ENCODE measurements at regions of chr1 and their contacts with region 1.

Region 1: DNA sequence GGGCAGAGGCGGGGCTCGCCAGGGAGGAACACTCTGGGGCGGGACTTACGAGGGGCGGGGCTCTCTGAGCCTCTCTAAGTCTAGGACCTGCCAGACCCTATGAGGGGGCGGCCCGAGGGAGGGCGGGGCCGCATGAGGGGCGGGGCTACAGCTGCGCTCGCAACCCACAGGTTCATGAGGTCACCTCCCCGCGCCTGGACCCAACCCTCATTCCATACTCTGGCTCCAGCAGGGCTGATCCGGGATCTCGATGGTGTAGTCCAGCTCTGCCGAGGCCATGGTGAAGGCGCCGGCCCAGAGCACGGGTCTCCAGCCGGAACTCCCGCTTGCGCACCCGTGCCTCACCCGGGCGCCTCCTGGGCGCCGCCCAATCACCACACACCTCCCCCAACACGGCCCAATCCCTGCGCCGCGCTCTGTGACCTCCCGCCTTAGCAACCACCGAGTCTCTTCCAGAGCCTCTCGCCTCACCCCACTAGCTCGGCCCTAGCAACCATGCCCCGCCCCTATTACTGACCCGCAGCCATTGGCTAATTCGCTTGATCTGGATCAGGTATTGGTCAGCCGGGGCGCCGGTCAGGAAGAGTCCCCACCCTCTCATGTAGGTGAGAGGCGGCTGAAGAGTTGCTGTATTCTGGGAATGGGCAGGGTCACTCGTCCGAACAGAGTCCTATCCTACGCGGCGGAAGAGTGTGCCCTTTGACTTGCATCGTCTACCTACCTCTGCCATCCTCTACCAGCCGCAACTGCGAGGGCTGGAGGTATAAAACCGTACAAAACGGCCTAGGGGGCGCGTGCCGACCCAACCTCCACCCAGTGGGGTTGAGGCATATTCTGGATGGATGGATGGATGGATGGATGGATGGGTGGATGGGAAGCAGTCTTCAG is at the starts of genes ARMH1 and TMEM53:
- DNase-seq: peak; percentile 98
- ATAC-seq: peak; percentile 90
- H3K4me3 Mint-ChIP-seq: peak within 1 kb of the TSS; percentile 87
- H3K27ac Mint-ChIP-seq: peak within 1 kb of the TSS; percentile 93
- H3K4me1 Mint-ChIP-seq: peaks cover 32% of the 10 kb centered on the region
- H3K27me3 Mint-ChIP-seq: no peaks in the 10 kb centered on the region
- CTCF ChIP-seq: no peak
- total RNA-seq, gene ARMH1: 18.1 and 19.9 TPM in 2 replicates
- total RNA-seq, gene TMEM53: 4.6 and 4.8 TPM in 2 replicates

Region 2: DNA sequence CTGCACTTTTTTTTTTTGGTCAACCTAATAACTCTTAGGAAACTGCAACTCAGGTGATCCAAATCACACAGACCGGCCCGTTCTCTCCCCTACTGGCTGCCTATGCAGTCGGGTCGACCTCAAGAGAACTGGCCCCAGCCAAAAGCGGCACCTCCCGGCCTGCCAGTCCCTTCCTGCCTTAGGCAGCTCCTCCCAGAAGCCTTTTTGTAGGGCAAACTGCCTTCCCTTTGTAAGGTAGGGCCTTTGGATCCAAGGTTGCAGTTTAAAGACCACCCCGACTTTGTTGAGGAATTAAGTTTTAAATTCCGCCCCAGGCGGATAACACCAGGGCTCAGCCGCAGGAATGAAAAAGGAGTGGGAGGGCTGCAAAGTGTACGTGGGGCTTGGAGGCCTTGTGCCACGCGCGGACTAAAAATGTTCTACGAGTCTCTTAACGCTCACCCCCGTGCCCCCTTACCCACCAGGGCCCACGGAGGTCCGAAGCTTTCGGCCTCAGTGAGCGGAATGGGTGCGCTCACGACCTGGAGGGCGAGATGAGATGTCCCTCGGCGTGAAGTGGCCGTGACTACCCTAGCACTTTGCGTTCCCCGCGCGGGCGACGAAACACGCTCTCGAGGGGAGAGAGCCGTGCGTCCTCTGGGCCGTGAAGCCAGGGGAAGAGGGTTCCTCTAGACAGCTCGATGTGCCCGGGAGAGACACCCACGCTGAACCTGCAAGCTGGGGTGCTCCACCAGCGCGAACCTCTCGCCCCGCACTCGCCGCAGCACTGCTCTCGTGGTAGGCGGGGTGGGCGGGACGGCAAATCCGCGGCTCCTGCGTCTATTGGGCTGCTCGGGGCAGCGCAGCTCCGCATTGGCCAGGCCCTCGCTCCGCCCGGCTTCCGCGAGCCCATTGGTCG is 967.5 kb before region 1 on chr1:
- CTCF ChIA-PET with region 1: no interaction called
- POLR2A ChIA-PET with region 1: no interaction called
- intact Hi-C with region 1: loop called (anchors 5 kb)
- DNase-seq: no peak
- ATAC-seq: peak; percentile 97
- H3K4me3 Mint-ChIP-seq: peak overlapping the region; percentile 86
- H3K27ac Mint-ChIP-seq: peak overlapping the region; percentile 63
- H3K4me1 Mint-ChIP-seq: peaks cover 33% of the 10 kb centered on the region
- H3K27me3 Mint-ChIP-seq: no peaks in the 10 kb centered on the region
- CTCF ChIP-seq: no peak

Region 3: DNA sequence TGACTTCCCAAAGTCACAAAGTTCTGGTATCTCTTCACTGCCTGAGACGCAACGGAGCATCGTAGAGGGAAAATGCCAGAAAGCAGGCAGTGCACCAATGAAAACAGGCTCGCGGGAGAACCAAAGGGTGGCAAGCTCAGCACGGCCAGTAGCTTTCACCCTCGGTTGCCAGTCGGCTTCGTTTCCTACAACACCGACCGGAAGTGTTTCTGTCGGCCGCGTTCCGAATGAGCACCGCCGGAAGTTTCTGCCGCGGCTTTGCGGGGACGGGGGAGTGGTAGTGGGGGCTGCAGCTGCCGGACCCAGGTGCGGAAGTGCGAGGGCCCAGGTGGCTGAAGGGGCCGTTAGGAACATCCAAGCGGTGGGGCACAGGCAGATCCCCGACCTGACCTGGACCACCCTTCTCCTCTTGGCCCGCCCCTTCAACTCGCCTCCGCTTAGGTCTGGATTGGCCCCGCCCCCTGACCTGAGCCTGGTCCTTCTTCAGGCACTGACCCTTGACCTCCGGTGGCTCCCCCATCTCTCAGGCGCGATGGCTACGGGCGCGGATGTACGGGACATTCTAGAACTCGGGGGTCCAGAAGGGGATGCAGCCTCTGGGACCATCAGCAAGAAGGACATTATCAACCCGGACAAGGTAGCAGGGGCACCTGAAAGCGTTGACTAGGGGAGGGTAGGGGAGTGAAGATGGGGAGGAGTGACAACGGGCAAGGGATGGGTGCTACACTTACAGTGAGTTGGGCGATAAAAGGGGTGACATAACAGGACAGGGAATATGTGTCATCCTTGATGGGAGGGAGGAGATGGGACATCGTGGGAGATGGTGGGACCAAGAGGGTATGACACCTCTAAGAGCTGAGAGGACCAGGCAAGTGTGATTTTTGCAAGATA is 460.9 kb before region 1 on chr1 and contains the start of gene DMAP1:
- CTCF ChIA-PET with region 1: no interaction called
- POLR2A ChIA-PET with region 1: interaction called, 5 read pairs
- intact Hi-C with region 1: loop called (anchors 1 kb)
- DNase-seq: peak; percentile 87
- ATAC-seq: peak; percentile 83
- H3K4me3 Mint-ChIP-seq: peak within 1 kb of the TSS; percentile 95
- H3K27ac Mint-ChIP-seq: peak within 1 kb of the TSS; percentile 91
- H3K4me1 Mint-ChIP-seq: peaks cover 38% of the 10 kb centered on the region
- H3K27me3 Mint-ChIP-seq: no peaks in the 10 kb centered on the region
- CTCF ChIP-seq: no peak
- total RNA-seq, gene DMAP1: 59.6 and 64.7 TPM in 2 replicates

Region 4: DNA sequence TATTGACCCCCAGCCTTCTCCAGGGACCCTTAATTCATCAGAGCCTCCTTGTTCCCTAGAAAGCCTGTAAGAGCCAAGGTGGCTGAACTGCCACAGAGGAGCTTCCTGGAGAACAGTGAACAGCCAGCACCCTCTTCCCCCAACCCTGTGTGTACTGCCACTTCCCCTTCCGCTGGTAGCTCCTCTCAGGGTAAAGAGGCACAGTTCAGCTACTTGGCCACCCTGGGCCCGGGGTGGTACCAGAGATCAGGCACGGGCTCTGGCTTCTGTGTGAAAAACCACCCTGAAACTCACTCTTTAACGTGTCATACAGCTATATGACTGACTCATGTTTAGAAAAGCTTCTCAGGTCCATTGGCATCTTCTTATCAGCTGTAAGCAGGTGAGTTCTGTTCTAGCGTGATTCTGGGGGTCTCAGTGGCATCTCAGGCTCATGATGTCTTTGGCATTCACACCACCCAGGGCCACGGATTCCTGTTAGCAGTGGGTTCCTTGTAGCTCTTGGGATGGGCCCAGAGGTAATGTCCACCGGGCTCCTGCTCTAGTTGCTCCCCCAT is 22.5 kb after region 1 on chr1:
- CTCF ChIA-PET with region 1: interaction called, 11 read pairs
- POLR2A ChIA-PET with region 1: interaction called, 29 read pairs
- intact Hi-C with region 1: loop called (anchors 1 kb)
- DNase-seq: peak; percentile 30
- ATAC-seq: peak; percentile 70
- H3K4me3 Mint-ChIP-seq: peak overlapping the region; percentile 55
- H3K27ac Mint-ChIP-seq: peak overlapping the region; percentile 84
- H3K4me1 Mint-ChIP-seq: peaks cover 52% of the 10 kb centered on the region
- H3K27me3 Mint-ChIP-seq: no peaks in the 10 kb centered on the region
- CTCF ChIP-seq: no peak

Region 5: DNA sequence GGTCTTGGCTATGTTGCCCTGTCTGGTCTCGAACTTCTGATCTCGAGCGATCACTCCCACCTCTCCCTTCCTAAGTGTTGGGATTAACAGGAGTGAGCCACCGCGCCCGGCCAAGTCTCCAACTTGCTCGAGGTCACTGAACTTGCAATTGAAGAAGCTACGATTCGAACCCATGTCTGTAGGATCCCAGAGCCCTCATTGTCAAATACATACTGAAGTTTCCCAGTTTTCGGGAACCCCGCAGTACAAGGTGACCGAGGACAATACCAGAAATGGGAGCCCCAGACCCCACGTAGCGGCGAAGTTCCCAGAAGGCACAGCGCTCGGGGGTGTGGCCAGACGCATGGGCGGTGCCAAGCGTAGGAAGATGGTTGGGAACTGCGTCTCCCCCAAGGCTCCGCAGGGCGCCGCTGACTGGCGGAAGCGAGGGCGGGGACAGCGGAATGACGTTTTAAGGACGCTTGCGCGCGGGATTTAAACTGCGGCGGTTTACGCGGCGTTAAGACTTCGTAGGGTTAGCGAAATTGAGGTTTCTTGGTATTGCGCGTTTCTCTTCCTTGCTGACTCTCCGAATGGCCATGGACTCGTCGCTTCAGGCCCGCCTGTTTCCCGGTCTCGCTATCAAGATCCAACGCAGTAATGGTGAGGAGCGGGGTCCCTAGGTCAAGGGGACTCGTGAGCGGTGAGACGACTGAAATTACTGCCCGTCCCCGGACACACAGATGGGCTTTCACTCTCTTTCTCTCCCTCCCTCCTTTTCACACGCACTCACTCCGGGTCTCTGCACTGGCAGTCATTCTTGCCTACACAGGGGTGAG is 65.2 kb after region 1 on chr1 and contains the start of gene KIF2C:
- CTCF ChIA-PET with region 1: no interaction called
- POLR2A ChIA-PET with region 1: no interaction called
- intact Hi-C with region 1: loop called (anchors 2 kb)
- DNase-seq: peak; percentile 94
- ATAC-seq: peak; percentile 100
- H3K4me3 Mint-ChIP-seq: peak within 1 kb of the TSS; percentile 93
- H3K27ac Mint-ChIP-seq: peak within 1 kb of the TSS; percentile 90
- H3K4me1 Mint-ChIP-seq: peaks cover 15% of the 10 kb centered on the region
- H3K27me3 Mint-ChIP-seq: no peaks in the 10 kb centered on the region
- CTCF ChIP-seq: no peak
- total RNA-seq, gene KIF2C: 1.00 and 1.8 TPM in 2 replicates

Measured in activated B cell treated with CpG ODN at 0.5 μM for 24 hours (primary cell).